Adrenal gland (tissue), 19 donors: ENCODE measurements at regions of chr12 and their contacts with region 1.

Region 1: GRCh38 chr12:52213512-52214420 is 19.3 kb upstream of the KRT7 start:
- DNase-seq: peak; percentile 87 to 92 (median 90)
- H3K4me3 ChIP-seq: no peak overlapping the region
- H3K27ac ChIP-seq: no peak overlapping the region
- H3K4me1 ChIP-seq: peaks cover 0 to 20% of the 10 kb centered on the region in 2 donors
- H3K27me3 ChIP-seq: no peaks in the 10 kb centered on the region
- CTCF ChIP-seq: peak; percentile 97 to 100 (median 100)
- POLR2A ChIP-seq: no peak

Region 2: GRCh38 chr12:51721282-51721940 is 492.4 kb before region 1 on chr12:
- intact Hi-C with region 1: no loop called
- DNase-seq: peak in 6 of 7 donors; percentile 5 to 65 (median 33)
- H3K4me3 ChIP-seq: no peak overlapping the region
- H3K27ac ChIP-seq: no peak overlapping the region
- H3K4me1 ChIP-seq: no peaks in the 10 kb centered on the region
- H3K27me3 ChIP-seq: no peaks in the 10 kb centered on the region
- CTCF ChIP-seq: peak in 2 of 6 experiments; percentile 10 to 12
- POLR2A ChIP-seq: no peak

Region 3: GRCh38 chr12:52151859-52152783 is 61.6 kb before region 1 on chr12:
- intact Hi-C with region 1: no loop called
- DNase-seq: peak in 6 of 7 donors; percentile 64 to 73 (median 70)
- H3K4me3 ChIP-seq: peak overlapping the region in 1 of 4 donors; percentile 36
- H3K27ac ChIP-seq: no peak overlapping the region
- H3K4me1 ChIP-seq: peaks cover under 1 to 11% of the 10 kb centered on the region in 2 donors
- H3K27me3 ChIP-seq: no peaks in the 10 kb centered on the region
- CTCF ChIP-seq: peak; percentile 50 to 83 (median 78)
- POLR2A ChIP-seq: no peak

Region 4: DNA sequence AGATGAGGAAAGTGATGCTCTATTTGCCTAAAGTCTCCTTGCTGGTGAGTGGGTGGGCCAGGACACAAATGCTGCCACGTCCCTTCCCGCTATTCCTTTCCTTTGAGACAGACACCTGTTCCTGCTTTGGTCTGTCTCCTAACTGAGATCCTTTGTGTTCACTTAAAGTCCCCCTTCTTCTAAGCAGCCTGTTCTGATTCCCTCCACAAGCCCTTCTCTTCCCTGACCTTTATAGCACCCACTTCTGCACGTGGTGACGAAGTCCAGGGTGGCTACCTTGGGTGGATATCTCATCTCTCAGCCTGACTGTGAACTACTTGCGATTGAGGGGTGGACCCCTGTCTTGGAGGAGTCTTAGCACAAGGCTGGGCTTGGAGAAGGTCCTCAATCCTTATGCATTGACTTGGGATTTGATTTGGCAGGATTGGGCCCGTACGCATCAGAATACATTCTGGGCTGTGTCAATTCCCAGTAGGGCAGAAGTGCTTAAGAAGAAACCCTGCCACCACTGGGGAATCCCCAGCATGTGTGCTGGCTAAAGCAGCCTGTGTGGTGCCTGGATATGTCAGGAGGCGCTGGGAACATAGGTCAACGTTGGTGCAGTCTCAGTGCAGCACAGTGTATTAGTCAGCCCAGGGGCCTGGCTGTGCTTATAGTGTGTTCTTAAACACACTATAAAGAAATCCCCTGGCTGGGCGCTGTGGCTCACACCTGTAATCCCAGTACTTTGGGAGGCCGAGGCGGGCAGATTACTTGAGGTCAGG is 45.6 kb before region 1 on chr12:
- intact Hi-C with region 1: loop called in 1 of 2 experiments (anchors 2 kb)
- DNase-seq: no peak
- H3K4me3 ChIP-seq: no peak overlapping the region
- H3K27ac ChIP-seq: no peak overlapping the region
- H3K4me1 ChIP-seq: peaks cover 8 to 23% of the 10 kb centered on the region in 2 donors
- H3K27me3 ChIP-seq: no peaks in the 10 kb centered on the region
- CTCF ChIP-seq: no peak
- POLR2A ChIP-seq: no peak

Region 5: GRCh38 chr12:52178984-52179383 is 34.8 kb before region 1 on chr12:
- intact Hi-C with region 1: no loop called
- DNase-seq: peak in 2 of 7 donors; percentile 49 to 64
- H3K4me3 ChIP-seq: no peak overlapping the region
- H3K27ac ChIP-seq: peak overlapping the region in 3 of 5 donors; percentile 39 to 77 (median 63)
- H3K4me1 ChIP-seq: peaks cover 21 to 38% of the 10 kb centered on the region in 2 donors
- H3K27me3 ChIP-seq: no peaks in the 10 kb centered on the region
- CTCF ChIP-seq: no peak
- POLR2A ChIP-seq: no peak

Region 6: GRCh38 chr12:52278541-52279421 is 65.0 kb after region 1 on chr12:
- intact Hi-C with region 1: loop called in 1 of 2 experiments (anchors 5 kb)
- DNase-seq: peak; percentile 52 to 84 (median 80)
- H3K4me3 ChIP-seq: peak overlapping the region in 1 of 4 donors; percentile 25
- H3K27ac ChIP-seq: no peak overlapping the region
- H3K4me1 ChIP-seq: peaks cover 4 to 7% of the 10 kb centered on the region in 2 donors
- H3K27me3 ChIP-seq: no peaks in the 10 kb centered on the region
- CTCF ChIP-seq: peak; percentile 72 to 99 (median 94)
- POLR2A ChIP-seq: no peak

Region 7: DNA sequence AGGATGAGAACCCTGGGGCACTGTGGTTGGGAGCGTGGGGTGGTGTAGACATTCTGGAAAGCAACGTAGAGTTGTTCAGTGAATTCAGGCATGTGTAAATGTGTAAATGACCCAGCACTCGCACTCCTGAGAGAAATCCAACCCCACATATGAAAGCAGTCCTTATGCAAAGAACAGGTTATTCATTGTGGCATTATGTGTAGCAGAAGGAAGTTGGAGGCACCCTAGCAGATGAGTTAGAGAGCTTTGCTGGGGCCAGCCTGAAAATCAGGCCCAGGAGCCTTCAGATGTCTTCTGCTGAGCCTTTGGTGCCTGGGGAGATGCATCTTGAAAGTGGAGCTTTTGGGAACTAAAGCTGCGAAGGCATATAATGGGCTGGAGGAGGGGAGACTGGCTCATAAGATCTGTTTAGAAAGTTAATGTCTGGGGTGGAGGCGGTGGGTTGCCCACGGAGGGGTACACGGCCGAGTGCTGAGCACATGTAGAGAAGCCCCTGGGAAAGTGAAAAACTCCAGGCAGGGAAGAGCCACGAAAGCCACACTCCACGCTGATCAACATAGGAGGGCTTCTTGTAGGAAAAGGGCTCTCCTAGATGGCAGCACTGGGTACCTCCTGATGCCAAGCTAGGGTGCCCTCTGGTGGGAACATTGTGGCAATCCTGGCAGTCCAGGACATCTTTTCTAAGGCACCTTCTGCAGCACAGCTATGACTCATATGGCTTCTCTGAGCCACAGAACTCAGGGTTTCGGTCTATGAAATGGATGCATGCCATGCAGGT is 113.5 kb after region 1 on chr12:
- intact Hi-C with region 1: loop called in 1 of 2 experiments (anchors 10 kb)
- DNase-seq: peak; percentile 77 to 93 (median 87)
- H3K4me3 ChIP-seq: no peak overlapping the region
- H3K27ac ChIP-seq: no peak overlapping the region
- H3K4me1 ChIP-seq: no peaks in the 10 kb centered on the region
- H3K27me3 ChIP-seq: peaks cover 4% of the 10 kb centered on the region
- CTCF ChIP-seq: peak; percentile 53 to 83 (median 77)
- POLR2A ChIP-seq: no peak